ENCODE measurements at regions of chr13 and their contacts with region 1.

Region 1: GRCh38 chr13:27043013-27043412 is 128.6 kb downstream of the USP12 start:
- DNase-seq: peak; percentile 87
- ATAC-seq: peak; percentile 88
- H3K4me3 ChIP-seq: no peak overlapping the region
- H3K27ac ChIP-seq: peak overlapping the region; percentile 98
- H3K4me1 ChIP-seq: peaks cover 48% of the 10 kb centered on the region
- H3K27me3 ChIP-seq: no peaks in the 10 kb centered on the region
- CTCF ChIP-seq: no peak

Region 2: GRCh38 chr13:26688286-26688685 is 354.7 kb before region 1 on chr13:
- CTCF ChIA-PET with region 1: no interaction called
- POLR2A ChIA-PET with region 1: no interaction called
- in situ Hi-C with region 1: no loop called
- intact Hi-C with region 1: no loop called
- DNase-seq: no peak
- ATAC-seq: no peak
- H3K4me3 ChIP-seq: no peak overlapping the region
- H3K27ac ChIP-seq: no peak overlapping the region
- H3K4me1 ChIP-seq: no peaks in the 10 kb centered on the region
- H3K27me3 ChIP-seq: no peaks in the 10 kb centered on the region
- CTCF ChIP-seq: no peak

Region 3: DNA sequence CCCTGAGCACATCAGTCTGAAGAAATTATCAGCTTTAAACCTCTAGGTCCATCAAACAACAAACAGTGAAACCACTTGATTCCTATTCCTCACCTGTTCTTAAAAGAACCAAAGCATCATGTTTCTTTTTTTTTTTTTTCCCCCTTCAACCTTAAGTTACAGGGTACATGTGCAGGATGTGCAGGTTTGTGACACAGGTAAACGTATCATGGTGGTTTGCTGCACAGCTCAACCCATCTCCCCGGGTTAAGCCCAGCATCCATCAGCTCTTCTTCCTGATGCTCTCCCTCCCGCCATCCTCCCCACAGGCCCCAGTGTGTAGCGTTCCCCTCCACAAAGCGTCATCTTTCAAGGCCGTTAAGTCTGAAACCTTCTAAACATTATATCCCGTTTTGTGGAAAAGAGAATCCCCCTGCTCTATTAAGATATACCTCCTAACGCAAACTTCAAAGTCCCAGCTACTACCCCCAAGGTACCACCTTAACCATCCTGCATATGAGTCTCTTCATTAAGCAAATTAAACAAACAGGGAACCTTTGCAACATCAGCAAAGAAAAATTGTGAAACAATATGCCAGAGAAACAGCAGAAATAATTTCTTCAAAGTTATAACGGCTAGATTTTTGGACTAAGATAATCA is 117.8 kb after region 1 on chr13:
- CTCF ChIA-PET with region 1: no interaction called
- POLR2A ChIA-PET with region 1: interaction called, 19 read pairs
- in situ Hi-C with region 1: no loop called
- intact Hi-C with region 1: no loop called
- DNase-seq: no peak
- ATAC-seq: no peak
- H3K4me3 ChIP-seq: no peak overlapping the region
- H3K27ac ChIP-seq: no peak overlapping the region
- H3K4me1 ChIP-seq: peaks cover 61% of the 10 kb centered on the region
- H3K27me3 ChIP-seq: no peaks in the 10 kb centered on the region
- CTCF ChIP-seq: no peak